Aorta (tissue), 5 donors: ENCODE measurements at regions of chr7 and their contacts with region 1.

Region 1: GRCh38 chr7:151631968-151632749 is 112.5 kb upstream of the RHEB start:
- DNase-seq: peak; percentile 89 to 94
- ATAC-seq: peak; percentile 88
- H3K4me3 ChIP-seq: peak overlapping the region; percentile 96
- H3K27ac ChIP-seq: peak overlapping the region; percentile 87 to 98
- H3K4me1 ChIP-seq: peaks cover 0 to 6% of the 10 kb centered on the region in 2 donors
- H3K27me3 ChIP-seq: no peaks in the 10 kb centered on the region

Region 2: DNA sequence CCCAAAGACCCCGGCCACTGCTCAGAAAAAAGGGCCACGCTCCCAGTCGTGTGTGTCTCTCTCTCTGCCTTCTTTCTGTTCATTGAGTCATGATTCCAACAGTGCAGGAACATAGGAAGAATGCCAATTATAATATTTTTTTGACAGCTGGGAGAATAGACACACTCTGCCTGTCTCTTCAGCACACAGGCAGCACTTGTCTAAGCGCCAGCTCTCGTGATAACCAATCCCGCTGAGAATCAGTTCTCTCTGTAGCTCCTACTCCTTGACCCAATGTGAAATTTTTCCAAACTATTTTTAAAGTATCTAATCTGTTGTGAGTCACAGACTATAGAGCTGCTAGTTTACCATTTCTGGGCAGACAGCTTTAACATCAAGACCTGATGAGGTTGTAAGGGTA is 33.2 kb after region 1 on chr7:
- intact Hi-C with region 1: loop called in 1 of 2 experiments (anchors 5 kb)
- DNase-seq: peak; percentile 77 to 89
- ATAC-seq: peak; percentile 68
- H3K4me3 ChIP-seq: no peak overlapping the region
- H3K27ac ChIP-seq: peak overlapping the region in 1 of 2 donors; percentile 62
- H3K4me1 ChIP-seq: peaks cover 4 to 5% of the 10 kb centered on the region in 2 donors
- H3K27me3 ChIP-seq: no peaks in the 10 kb centered on the region

Region 3: DNA sequence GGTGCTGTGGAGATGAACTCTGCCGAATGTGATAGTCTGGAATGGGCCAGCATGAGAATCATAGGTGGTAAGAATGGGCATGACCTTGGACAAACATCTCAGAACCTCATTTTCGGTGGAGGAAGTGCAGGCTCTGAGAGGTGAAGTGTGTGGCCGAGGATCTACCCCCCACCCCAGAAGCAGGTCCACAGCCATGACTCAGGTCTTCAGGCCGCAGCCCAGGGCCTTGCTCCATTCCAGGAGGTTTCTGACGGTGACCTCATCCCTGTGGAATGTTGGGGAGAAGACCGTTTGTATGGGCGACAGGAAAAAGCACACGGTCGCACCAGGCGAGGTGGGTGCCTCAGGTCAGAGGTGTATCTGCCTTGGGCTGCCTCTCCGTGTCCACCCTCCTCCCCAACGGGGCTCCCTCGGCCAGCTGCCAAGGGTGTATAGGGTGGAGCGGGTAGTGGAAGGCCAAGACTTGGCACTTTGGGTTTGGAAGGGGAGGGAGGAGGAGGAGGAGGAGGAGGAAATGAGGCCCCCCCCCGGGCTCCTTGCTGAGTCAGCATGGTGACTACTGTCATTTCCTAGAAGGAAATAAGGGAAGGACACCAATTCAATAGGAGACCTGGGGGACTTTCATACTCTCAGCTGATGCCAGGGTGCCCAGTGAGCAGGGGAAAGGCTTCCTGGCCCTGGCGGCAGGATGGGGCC is 55.5 kb after region 1 on chr7:
- intact Hi-C with region 1: loop called (anchors 5 kb)
- DNase-seq: peak; percentile 88 to 91
- ATAC-seq: peak; percentile 81
- H3K4me3 ChIP-seq: no peak overlapping the region
- H3K27ac ChIP-seq: peak overlapping the region in 1 of 2 donors; percentile 44
- H3K4me1 ChIP-seq: no peaks in the 10 kb centered on the region
- H3K27me3 ChIP-seq: no peaks in the 10 kb centered on the region